ENCODE measurements at regions of chr6 and their contacts with region 1.

Region 1: GRCh38 chr6:89745716-89746115 is 73.9 kb downstream of the MDN1 start:
- DNase-seq: peak; percentile 10
- H3K4me3 ChIP-seq: no peak overlapping the region
- H3K27ac ChIP-seq: no peak overlapping the region
- H3K27me3 ChIP-seq: no peaks in the 10 kb centered on the region
- CTCF ChIP-seq: no peak

Region 2: GRCh38 chr6:89630488-89630887 is 115.2 kb before region 1 on chr6:
- CTCF ChIA-PET with region 1: no interaction called
- POLR2A ChIA-PET with region 1: no interaction called
- DNase-seq: no peak
- H3K4me3 ChIP-seq: no peak overlapping the region
- H3K27ac ChIP-seq: no peak overlapping the region
- H3K27me3 ChIP-seq: no peaks in the 10 kb centered on the region
- CTCF ChIP-seq: no peak

Region 3: DNA sequence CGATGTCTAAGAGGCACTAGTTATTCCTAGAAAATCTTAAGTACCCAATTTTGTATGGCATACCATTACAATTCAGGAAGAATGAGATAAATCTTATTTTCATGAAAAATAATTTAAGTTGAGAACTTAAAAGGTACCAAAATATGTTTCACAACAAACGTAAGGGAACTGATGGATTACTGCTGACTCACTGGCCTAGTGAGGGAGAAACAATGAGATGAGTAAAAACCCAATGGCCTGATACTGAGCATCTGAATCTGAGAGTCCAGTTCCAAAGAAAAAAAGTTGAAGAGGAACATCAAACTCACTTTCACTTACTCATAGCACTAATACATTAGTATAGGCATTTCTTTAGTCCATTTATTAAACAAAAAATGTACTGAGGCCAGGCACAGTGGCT is 17.8 kb after region 1 on chr6:
- CTCF ChIA-PET with region 1: no interaction called
- POLR2A ChIA-PET with region 1: interaction called, 12 read pairs
- DNase-seq: peak; percentile 7
- H3K4me3 ChIP-seq: no peak overlapping the region
- H3K27ac ChIP-seq: no peak overlapping the region
- H3K27me3 ChIP-seq: no peaks in the 10 kb centered on the region
- CTCF ChIP-seq: no peak

Measured in AG04450 (cell line).